CD8-positive, alpha-beta T cell (primary cell): ENCODE measurements at regions of chr15 and their contacts with region 1.

Region 1: GRCh38 chr15:45126535-45127158 is 3.0 kb downstream of the DUOXA1 start:
- DNase-seq: peak in 5 of 9 experiments; percentile 36 to 68 (median 52)
- ATAC-seq: peak; percentile 60
- H3K4me3 ChIP-seq: no peak overlapping the region
- H3K4me3 Mint-ChIP-seq: no peak overlapping the region
- H3K27ac ChIP-seq: no peak overlapping the region
- H3K27ac Mint-ChIP-seq: no peak overlapping the region
- H3K4me1 ChIP-seq: no peaks in the 10 kb centered on the region
- H3K4me1 Mint-ChIP-seq: peaks cover 5% of the 10 kb centered on the region
- H3K27me3 ChIP-seq: peaks cover 9 to 28% of the 10 kb centered on the region in 2 experiments
- H3K27me3 Mint-ChIP-seq: peaks cover 64% of the 10 kb centered on the region
- CTCF ChIP-seq: peak; percentile 59

Region 2: GRCh38 chr15:45268135-45268534 is 141.5 kb after region 1 on chr15:
- CTCF ChIA-PET with region 1: interaction called, 3 read pairs
- POLR2A ChIA-PET with region 1: no interaction called
- intact Hi-C with region 1: loop called in 1 of 2 experiments (anchors 1 kb)
- DNase-seq: peak in 3 of 9 experiments; percentile 15 to 41 (median 22)
- ATAC-seq: no peak
- H3K4me3 ChIP-seq: no peak overlapping the region
- H3K4me3 Mint-ChIP-seq: no peak overlapping the region
- H3K27ac ChIP-seq: no peak overlapping the region
- H3K27ac Mint-ChIP-seq: no peak overlapping the region
- H3K4me1 ChIP-seq: no peaks in the 10 kb centered on the region
- H3K4me1 Mint-ChIP-seq: no peaks in the 10 kb centered on the region
- H3K27me3 ChIP-seq: no peaks in the 10 kb centered on the region
- H3K27me3 Mint-ChIP-seq: no peaks in the 10 kb centered on the region
- CTCF ChIP-seq: no peak